Endothelial cell of umbilical vein (primary cell): ENCODE measurements at regions of chr3 and their contacts with region 1.

Region 1: GRCh38 chr3:33287672-33288282 is 10.5 kb downstream of the FBXL2 start:
- DNase-seq: no peak
- H3K4me3 ChIP-seq: no peak overlapping the region
- H3K27ac ChIP-seq: no peak overlapping the region
- H3K4me1 ChIP-seq: no peaks in the 10 kb centered on the region
- H3K27me3 ChIP-seq: no peaks in the 10 kb centered on the region
- CTCF ChIP-seq: no peak
- POLR2A ChIP-seq: no peak

Region 2: GRCh38 chr3:33299395-33300081 is 11.8 kb after region 1 on chr3:
- CTCF ChIA-PET with region 1: interaction called, 16 read pairs
- POLR2A ChIA-PET with region 1: no interaction called
- dilution Hi-C with region 1: no loop called
- intact Hi-C with region 1: no loop called
- DNase-seq: no peak
- H3K4me3 ChIP-seq: no peak overlapping the region
- H3K27ac ChIP-seq: no peak overlapping the region
- H3K4me1 ChIP-seq: peaks cover 5% of the 10 kb centered on the region
- H3K27me3 ChIP-seq: no peaks in the 10 kb centered on the region
- CTCF ChIP-seq: no peak
- POLR2A ChIP-seq: no peak